ENCODE measurements at regions of chr1 and their contacts with region 1.

Region 1: GRCh38 chr1:194295685-194296084 is 1109.3 kb upstream of the B3GALT2 start:
- DNase-seq: peak; percentile 27
- ATAC-seq: peak; percentile 76
- H3K4me3 Mint-ChIP-seq: no peak overlapping the region
- H3K27ac Mint-ChIP-seq: peak overlapping the region; percentile 53
- H3K4me1 Mint-ChIP-seq: peaks cover 44% of the 10 kb centered on the region
- H3K27me3 Mint-ChIP-seq: no peaks in the 10 kb centered on the region

Region 2: GRCh38 chr1:192654591-192655251 is 1641.0 kb before region 1 on chr1:
- CTCF ChIA-PET with region 1: no interaction called
- POLR2A ChIA-PET with region 1: no interaction called
- intact Hi-C with region 1: loop called in 1 of 2 experiments (anchors 10 kb)
- DNase-seq: peak; percentile 29
- ATAC-seq: peak; percentile 88
- H3K4me3 Mint-ChIP-seq: no peak overlapping the region
- H3K27ac Mint-ChIP-seq: peak overlapping the region; percentile 45
- H3K4me1 Mint-ChIP-seq: peaks cover 12% of the 10 kb centered on the region
- H3K27me3 Mint-ChIP-seq: peaks cover 9% of the 10 kb centered on the region

Region 3: DNA sequence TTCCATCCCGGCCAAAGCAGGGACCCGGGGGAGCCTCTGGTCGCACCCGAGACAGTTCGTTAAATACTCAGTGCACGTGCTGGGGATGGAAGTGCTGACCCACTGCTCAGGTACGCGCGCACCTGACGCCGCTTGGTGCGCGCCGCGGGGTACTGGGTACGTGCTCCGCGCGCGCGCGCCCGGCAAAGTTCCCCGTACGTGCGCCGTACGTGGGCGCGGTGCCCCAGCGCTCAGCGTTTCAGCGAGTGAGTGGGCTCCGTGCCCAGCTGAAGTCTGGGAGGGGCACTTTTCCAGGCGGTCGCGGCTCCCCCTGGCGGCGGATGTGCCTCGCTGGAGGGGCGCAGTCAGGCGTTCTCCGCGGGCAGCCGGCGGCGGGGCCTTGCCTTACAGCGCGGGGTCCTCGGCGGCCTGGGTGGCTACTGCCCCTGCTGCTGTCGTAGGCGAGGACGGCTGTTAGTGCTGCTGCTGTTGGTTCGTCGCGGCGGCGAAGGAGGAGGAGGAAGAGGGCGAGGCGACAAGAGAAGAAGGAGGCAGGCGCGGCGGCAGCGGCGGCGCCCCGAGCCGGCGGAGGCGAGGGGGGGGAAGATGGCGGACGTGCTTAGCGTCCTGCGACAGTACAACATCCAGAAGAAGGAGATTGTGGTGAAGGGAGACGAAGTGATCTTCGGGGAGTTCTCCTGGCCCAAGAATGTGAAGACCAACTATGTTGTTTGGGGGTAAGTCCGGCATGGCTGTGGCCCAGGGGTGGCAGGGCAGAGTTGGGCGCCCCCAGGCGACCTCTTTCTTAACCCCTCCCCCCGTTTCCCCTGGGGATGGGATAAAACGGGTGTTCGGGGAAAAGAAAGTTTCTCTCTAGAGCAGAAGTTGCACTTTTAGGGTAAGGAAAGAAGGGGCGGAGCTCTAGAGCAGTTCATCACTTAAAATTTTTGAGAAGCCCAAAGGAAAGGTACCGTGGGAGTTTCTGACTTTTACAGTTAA is 1173.8 kb before region 1 on chr1 and contains the start of gene CDC73:
- CTCF ChIA-PET with region 1: no interaction called
- POLR2A ChIA-PET with region 1: no interaction called
- intact Hi-C with region 1: loop called in 1 of 2 experiments (anchors 5 kb)
- DNase-seq: peak; percentile 99
- ATAC-seq: peak; percentile 94
- H3K4me3 Mint-ChIP-seq: peak within 1 kb of the TSS; percentile 91
- H3K27ac Mint-ChIP-seq: peak within 1 kb of the TSS; percentile 96
- H3K4me1 Mint-ChIP-seq: peaks cover 51% of the 10 kb centered on the region
- H3K27me3 Mint-ChIP-seq: no peaks in the 10 kb centered on the region
- total RNA-seq, gene CDC73: 40.8 to 52.4 TPM

Region 4: GRCh38 chr1:193406901-193407300 is 888.8 kb before region 1 on chr1:
- CTCF ChIA-PET with region 1: no interaction called
- POLR2A ChIA-PET with region 1: no interaction called
- intact Hi-C with region 1: loop called (anchors 1 to 2 kb)
- DNase-seq: no peak
- ATAC-seq: no peak
- H3K4me3 Mint-ChIP-seq: no peak overlapping the region
- H3K27ac Mint-ChIP-seq: no peak overlapping the region
- H3K4me1 Mint-ChIP-seq: peaks cover 24% of the 10 kb centered on the region
- H3K27me3 Mint-ChIP-seq: no peaks in the 10 kb centered on the region

Region 5: DNA sequence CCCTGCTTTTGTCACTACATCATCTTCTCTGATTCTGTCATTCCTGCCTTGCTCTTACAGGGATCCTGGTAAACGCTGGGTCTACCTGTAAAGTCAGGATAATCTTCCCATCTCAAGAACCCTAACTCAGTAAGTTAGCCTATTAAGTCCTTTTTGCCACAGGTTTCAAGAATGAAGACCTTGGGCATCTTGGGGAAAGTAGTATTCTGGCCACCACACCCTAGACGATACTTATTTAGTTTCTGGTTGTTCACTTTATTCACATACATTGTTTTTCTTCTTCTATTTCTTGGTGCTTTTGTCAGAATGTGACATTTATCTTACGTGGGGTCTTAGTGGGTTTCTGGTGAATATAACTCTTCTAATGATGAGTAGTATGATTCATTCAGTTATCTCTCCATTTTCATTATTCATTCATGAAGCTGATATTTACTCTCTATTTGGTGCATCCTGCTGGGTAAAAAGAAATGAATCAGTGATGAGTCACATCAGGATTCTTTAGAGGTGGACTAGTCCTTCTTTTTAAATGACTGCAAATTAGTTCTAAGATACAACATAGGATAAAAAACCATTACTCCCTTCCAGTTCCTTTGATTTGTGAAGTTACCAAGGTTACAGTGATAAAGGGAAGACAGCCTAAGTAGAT is 594.9 kb before region 1 on chr1:
- CTCF ChIA-PET with region 1: no interaction called
- POLR2A ChIA-PET with region 1: no interaction called
- intact Hi-C with region 1: loop called in 1 of 2 experiments (anchors 10 kb)
- DNase-seq: no peak
- ATAC-seq: peak; percentile 91
- H3K4me3 Mint-ChIP-seq: no peak overlapping the region
- H3K27ac Mint-ChIP-seq: no peak overlapping the region
- H3K4me1 Mint-ChIP-seq: peaks cover 15% of the 10 kb centered on the region
- H3K27me3 Mint-ChIP-seq: no peaks in the 10 kb centered on the region

Region 6: DNA sequence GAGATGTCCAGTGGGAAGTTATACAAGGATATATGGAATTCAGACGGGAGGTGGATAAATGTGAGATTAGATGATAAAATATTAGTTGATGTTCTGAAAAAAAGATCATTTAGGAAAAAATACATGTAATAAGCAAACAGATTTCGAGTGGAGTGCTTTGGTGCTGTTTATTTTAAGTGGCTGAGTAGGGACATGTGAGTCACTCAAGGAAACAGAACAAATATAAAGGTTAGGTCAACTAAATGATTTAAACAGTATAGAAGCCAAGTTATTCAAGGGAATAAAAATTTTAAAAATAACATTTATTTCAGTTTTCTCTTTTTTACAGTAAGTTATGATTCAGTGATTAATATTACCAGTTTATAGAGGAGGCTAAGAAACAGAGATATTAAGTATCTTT is 62.6 kb before region 1 on chr1:
- CTCF ChIA-PET with region 1: no interaction called
- POLR2A ChIA-PET with region 1: no interaction called
- intact Hi-C with region 1: no loop called
- DNase-seq: no peak
- ATAC-seq: no peak
- H3K4me3 Mint-ChIP-seq: no peak overlapping the region
- H3K27ac Mint-ChIP-seq: no peak overlapping the region
- H3K4me1 Mint-ChIP-seq: peaks cover 5% of the 10 kb centered on the region
- H3K27me3 Mint-ChIP-seq: no peaks in the 10 kb centered on the region

Region 7: DNA sequence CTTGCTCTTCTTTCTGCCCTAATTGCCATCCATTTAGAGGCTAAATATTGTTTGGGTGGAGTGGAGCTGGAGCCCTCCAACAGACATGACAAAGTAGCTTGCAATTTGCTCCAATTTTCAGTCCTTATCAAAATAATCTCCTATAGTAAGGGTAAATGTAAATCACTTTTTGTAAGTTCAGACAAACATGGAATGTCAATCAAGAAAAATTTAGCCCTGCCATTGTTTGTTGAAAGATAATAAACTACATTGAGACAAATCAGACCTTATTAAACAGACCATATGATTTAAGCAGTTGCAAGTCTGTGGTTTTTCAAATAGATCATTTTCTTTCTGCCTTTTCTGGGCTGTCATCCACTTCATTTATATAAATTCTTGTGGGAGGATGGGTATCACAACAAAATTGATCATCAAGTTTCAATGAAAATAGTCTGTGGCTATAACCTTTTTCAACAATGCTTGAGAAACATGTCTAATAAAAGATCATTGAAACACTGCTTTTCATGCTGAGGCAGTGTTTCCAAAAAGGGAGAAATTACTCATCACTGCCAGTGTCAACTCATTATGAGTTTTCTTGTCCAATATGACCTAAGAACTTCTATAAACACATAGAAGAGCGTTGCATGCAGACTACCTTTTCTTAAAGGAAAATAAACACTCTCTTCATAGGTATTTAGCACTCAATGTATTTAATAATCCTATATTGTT is 42.7 kb after region 1 on chr1:
- CTCF ChIA-PET with region 1: no interaction called
- POLR2A ChIA-PET with region 1: no interaction called
- intact Hi-C with region 1: loop called in 1 of 2 experiments (anchors 2 kb)
- DNase-seq: peak; percentile 24
- ATAC-seq: peak; percentile 85
- H3K4me3 Mint-ChIP-seq: no peak overlapping the region
- H3K27ac Mint-ChIP-seq: no peak overlapping the region
- H3K4me1 Mint-ChIP-seq: peaks cover 10% of the 10 kb centered on the region
- H3K27me3 Mint-ChIP-seq: no peaks in the 10 kb centered on the region